Activated CD4-positive, alpha-beta T cell treated with anti-CD3 and anti-CD28 coated beads, Interleukin-2, amount 10 ng/mL, durations not matched to agents 24 days and 14 days (primary cell): ENCODE measurements at regions of chr6 and their contacts with region 1.

Region 1: DNA sequence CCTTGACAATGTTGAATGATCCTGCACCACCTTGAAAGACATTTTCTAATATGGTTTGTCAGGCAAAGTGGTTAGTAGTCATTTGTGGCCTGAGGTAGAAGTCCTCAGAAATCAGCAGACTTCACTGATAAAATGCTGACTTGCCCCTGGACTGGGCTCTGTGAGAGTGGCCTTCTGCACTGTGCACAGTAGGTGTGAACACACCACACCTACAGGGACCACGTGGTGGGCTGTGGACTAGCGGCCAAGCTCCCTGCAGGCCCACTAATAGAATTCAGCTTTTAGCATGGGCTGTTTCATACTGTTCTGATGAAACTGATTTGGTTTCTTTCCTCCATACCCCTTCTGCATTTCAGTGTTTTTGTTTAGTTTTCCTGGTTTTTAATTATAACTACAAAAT is 7.3 kb downstream of the BPHL start:
- DNase-seq: no peak
- H3K4me3 Mint-ChIP-seq: no peak overlapping the region
- H3K27ac Mint-ChIP-seq: no peak overlapping the region
- H3K4me1 Mint-ChIP-seq: peaks cover 4% of the 10 kb centered on the region
- H3K27me3 Mint-ChIP-seq: no peaks in the 10 kb centered on the region

Region 2: GRCh38 chr6:3251462-3252314 is 125.9 kb after region 1 on chr6:
- intact Hi-C with region 1: loop called (anchors 1 kb)
- DNase-seq: peak; percentile 95
- H3K4me3 Mint-ChIP-seq: peak overlapping the region; percentile 24
- H3K27ac Mint-ChIP-seq: no peak overlapping the region
- H3K4me1 Mint-ChIP-seq: peaks cover 6% of the 10 kb centered on the region
- H3K27me3 Mint-ChIP-seq: peaks cover 43% of the 10 kb centered on the region

Region 3: DNA sequence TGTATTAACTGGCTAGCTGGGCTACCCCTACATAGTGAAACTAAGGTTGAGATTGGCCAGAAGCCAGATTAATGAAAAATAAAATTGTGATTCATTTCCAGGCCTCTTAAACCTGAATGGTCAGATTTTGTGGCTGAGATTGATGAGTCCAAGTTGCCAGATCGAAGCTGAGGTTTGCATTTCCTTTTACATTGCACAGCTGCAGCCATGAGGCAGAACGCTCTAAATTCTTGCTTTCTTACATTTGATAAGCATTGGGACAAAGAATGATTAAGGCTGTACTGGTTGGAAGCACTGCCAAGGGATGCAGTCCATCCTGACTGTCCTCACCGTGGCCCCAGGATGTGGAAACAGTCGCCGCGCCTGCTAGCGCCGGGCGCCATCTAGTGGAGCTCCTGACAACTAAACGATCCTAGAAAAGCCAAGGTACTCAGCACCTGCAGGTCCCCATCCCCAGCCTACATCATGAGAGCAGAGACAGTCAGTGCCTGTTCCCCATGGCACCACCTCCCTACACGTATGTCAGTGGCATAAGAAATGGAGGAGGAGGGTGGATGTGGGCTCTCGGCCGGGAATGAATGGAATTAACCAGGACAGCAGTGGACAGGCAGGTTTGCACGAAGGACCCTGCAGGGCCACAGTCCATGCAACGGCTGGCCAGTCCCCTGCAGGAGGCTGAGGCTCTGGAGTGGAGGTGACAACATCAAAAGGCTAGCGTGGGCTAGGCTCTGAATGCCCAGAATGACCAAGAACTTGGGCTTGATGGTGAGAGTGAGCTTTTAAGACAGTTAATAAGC is 606.7 kb after region 1 on chr6:
- intact Hi-C with region 1: loop called (anchors 2 kb)
- DNase-seq: peak; percentile 88
- H3K4me3 Mint-ChIP-seq: no peak overlapping the region
- H3K27ac Mint-ChIP-seq: no peak overlapping the region
- H3K4me1 Mint-ChIP-seq: peaks cover 2% of the 10 kb centered on the region
- H3K27me3 Mint-ChIP-seq: peaks cover 9% of the 10 kb centered on the region